Heart left ventricle (tissue), 16 donors: ENCODE measurements at regions of chr13 and their contacts with region 1.

Region 1: GRCh38 chr13:42039946-42040729 is 8.3 kb upstream of the DGKH start:
- DNase-seq: peak; percentile 93 to 96 (median 96)
- ATAC-seq: peak; percentile 83 to 96 (median 92)
- H3K4me3 ChIP-seq: peak overlapping the region; percentile 68 to 97 (median 90)
- H3K27ac ChIP-seq: peak overlapping the region; percentile 93 to 100 (median 98)
- H3K4me1 ChIP-seq: peaks cover 0 to 22% (median 10%) of the 10 kb centered on the region in 12 donors
- H3K27me3 ChIP-seq: no peaks in the 10 kb centered on the region
- CTCF ChIP-seq: peak in 3 of 12 donors; percentile 9 to 16 (median 11)
- POLR2A ChIP-seq: peak; percentile 48 to 98

Region 2: GRCh38 chr13:40984668-40985366 is 1055.3 kb before region 1 on chr13:
- intact Hi-C with region 1: no loop called
- DNase-seq: no peak
- ATAC-seq: peak in 1 of 4 donors; percentile 43
- H3K4me3 ChIP-seq: peak overlapping the region in 10 of 12 donors; percentile 14 to 57 (median 38)
- H3K27ac ChIP-seq: peak overlapping the region; percentile 73 to 95 (median 82)
- H3K4me1 ChIP-seq: peaks cover 18 to 85% (median 50%) of the 10 kb centered on the region in 12 donors
- H3K27me3 ChIP-seq: no peaks in the 10 kb centered on the region
- CTCF ChIP-seq: no peak
- POLR2A ChIP-seq: no peak

Region 3: DNA sequence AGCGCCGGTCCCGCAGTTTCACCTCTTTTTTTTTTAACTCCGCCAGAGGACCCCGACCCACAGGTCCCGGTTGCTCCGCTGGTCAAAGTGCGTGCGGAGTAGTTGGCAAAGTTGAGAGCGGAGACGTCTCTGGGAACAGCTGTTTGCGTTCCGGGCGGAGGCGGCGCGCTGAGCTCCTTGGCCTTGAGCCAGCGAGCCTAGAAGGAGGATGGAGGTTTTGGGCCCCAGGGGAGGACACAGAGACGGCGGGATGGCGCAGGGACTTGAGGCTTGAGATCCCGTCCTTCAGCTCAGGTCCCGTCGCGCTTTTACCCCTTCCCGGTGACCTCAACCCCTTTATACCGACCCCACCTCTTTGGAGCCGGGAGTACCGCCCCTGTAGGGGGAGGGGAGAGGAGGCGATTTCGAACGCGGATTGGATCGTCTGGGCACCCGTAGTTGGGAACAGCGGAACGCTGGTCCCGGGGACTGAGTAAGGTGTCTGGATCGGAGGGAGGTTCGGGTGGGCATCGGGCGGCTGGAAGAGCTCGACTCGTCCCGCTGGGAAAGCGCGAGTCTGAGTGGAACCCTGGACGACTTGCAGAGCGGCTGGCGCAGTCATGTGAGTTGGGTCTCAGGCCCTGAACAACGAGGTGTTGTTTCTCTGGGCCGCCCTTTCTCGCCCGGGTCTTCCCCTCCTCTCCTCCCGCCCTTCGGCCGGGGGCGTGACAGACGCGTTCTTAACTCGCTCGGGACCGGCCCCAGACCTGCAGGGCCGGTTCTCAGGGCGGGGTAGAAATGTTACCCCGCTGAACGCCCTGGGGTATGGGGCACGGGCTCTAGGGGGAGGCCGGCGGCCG is 978.8 kb before region 1 on chr13 and contains the start of gene WBP4:
- intact Hi-C with region 1: loop called in 1 of 10 experiments (anchors 10 kb)
- DNase-seq: peak; percentile 95 to 96 (median 96)
- ATAC-seq: peak; percentile 78 to 88 (median 84)
- H3K4me3 ChIP-seq: peak within 1 kb of the TSS; percentile 54 to 90 (median 79)
- H3K27ac ChIP-seq: peak within 1 kb of the TSS; percentile 92 to 100 (median 98)
- H3K4me1 ChIP-seq: peaks cover 6 to 71% (median 60%) of the 10 kb centered on the region in 12 donors
- H3K27me3 ChIP-seq: no peaks in the 10 kb centered on the region
- CTCF ChIP-seq: peak in 6 of 12 donors; percentile 10 to 45 (median 30)
- POLR2A ChIP-seq: peak in 1 of 2 donors; percentile 58
- total RNA-seq, gene WBP4: 12.4 to 24.6 (median 20.6) TPM

Region 4: DNA sequence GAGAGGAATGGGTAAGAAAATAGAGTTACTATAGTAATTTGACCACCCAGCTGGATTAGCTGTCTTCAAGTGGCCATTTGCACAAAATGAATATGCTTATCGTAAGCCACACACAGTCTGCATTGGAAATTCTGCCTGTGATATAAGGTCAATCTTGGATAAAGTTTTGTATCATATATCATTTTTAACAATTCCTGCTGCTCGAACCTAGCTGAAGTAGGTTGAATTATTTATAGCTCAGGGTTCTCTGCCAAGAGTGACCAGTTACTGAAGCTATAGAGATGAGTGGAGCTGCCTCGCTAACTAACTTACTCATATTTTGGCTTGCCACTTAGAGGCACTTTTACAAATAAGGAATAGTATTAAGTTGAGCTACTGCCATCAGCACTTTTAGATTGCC is 361.9 kb before region 1 on chr13:
- intact Hi-C with region 1: loop called in 2 of 10 experiments (anchors 10 kb)
- DNase-seq: no peak
- ATAC-seq: peak in 3 of 4 donors; percentile 48 to 70 (median 68)
- H3K4me3 ChIP-seq: no peak overlapping the region
- H3K27ac ChIP-seq: peak overlapping the region in 6 of 12 donors; percentile 2 to 55 (median 47)
- H3K4me1 ChIP-seq: peaks cover 0 to 28% (median 13%) of the 10 kb centered on the region in 12 donors
- H3K27me3 ChIP-seq: no peaks in the 10 kb centered on the region
- CTCF ChIP-seq: no peak
- POLR2A ChIP-seq: no peak

Region 5: GRCh38 chr13:41905600-41906254 is 134.4 kb before region 1 on chr13:
- intact Hi-C with region 1: loop called in 2 of 10 experiments (anchors 10 kb)
- DNase-seq: no peak
- ATAC-seq: peak in 3 of 4 donors; percentile 42 to 65 (median 55)
- H3K4me3 ChIP-seq: no peak overlapping the region
- H3K27ac ChIP-seq: no peak overlapping the region
- H3K4me1 ChIP-seq: no peaks in the 10 kb centered on the region
- H3K27me3 ChIP-seq: no peaks in the 10 kb centered on the region
- CTCF ChIP-seq: peak; percentile 35 to 66 (median 48)
- POLR2A ChIP-seq: no peak

Region 6: GRCh38 chr13:41960639-41961465 is 79.3 kb before region 1 on chr13 and contains the start of gene VWA8:
- intact Hi-C with region 1: loop called in 4 of 10 experiments (anchors 1 to 10 kb)
- DNase-seq: peak; percentile 84 to 92 (median 87)
- ATAC-seq: peak; percentile 75 to 97 (median 97)
- H3K4me3 ChIP-seq: peak within 1 kb of the TSS; percentile 53 to 95 (median 84)
- H3K27ac ChIP-seq: peak within 1 kb of the TSS; percentile 75 to 95 (median 90)
- H3K4me1 ChIP-seq: peaks cover 0 to 38% (median 10%) of the 10 kb centered on the region in 12 donors
- H3K27me3 ChIP-seq: no peaks in the 10 kb centered on the region
- CTCF ChIP-seq: peak in 1 of 12 donors; percentile 19
- POLR2A ChIP-seq: peak in 1 of 2 donors; percentile 20
- total RNA-seq, gene VWA8: 33.4 to 64.1 (median 50.9) TPM

Region 7: DNA sequence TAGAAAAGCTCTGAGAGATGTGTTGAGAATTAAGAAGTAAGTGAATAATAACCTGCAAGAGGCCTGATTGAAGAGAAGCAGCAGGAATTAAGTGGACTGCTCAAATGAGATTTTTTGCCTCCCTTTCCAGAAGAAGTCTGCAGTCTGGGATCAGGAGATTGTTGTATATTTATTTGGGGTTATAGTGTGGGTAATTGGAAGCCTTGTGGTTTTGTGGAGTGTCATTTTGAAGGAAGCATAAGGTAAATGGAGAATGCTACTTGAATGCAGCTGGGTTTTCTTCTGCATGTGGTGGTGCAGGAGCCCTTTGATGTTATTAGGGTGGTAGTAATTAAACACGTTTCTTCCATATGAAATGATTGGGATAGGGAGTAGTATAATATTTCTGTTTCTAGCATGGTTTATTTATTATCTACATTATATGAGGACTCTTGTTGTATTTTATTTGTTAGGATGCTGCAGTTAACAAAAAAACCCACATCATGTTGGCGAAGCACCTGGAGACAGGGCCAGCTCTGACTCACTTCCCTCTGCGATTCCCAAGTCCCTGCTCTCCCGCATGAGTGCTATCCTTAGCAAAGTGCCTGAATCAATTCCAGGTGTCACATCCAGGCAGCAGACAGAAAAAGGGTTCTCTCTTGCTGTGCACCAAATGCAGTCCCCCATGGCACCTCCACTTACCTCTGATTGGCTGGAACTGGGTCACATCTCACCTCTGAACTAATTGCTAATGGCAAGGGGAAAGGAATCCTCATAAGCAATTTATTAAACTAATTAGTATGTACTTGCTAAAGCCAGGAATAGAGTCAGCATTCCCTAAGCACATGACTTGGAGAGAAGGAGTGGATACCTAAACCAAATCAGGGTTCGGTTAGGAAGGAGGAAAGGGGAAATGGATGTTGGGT is 63.1 kb after region 1 on chr13:
- intact Hi-C with region 1: loop called in 5 of 10 experiments (anchors 5 to 10 kb)
- DNase-seq: no peak
- ATAC-seq: no peak
- H3K4me3 ChIP-seq: no peak overlapping the region
- H3K27ac ChIP-seq: no peak overlapping the region
- H3K4me1 ChIP-seq: peaks cover 0 to 24% (median 12%) of the 10 kb centered on the region in 12 donors
- H3K27me3 ChIP-seq: no peaks in the 10 kb centered on the region
- CTCF ChIP-seq: no peak
- POLR2A ChIP-seq: no peak

Region 8: DNA sequence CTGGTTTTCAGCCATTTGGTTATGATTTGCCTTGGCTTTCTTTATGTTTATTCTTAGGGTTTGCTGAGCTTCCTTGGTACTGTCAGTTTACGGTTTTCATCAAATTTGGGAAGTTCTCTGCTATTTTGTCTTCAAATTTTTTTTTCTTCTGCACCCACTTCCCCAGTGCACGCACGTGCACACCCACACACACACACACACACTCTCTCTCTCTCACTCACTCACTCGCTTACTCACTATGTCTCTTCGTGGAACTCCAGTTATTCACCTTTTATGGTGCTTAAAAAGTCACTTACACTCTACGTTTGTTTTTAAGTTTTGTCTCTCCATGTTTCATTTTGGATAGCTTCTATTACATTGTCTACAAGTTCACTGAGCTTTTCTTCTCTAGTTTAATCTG is 238.9 kb after region 1 on chr13:
- intact Hi-C with region 1: no loop called
- DNase-seq: no peak
- ATAC-seq: peak in 2 of 4 donors; percentile 12 to 24
- H3K4me3 ChIP-seq: no peak overlapping the region
- H3K27ac ChIP-seq: peak overlapping the region in 1 of 12 donors; percentile 65
- H3K4me1 ChIP-seq: peaks cover 0 to 44% (median 9%) of the 10 kb centered on the region in 12 donors
- H3K27me3 ChIP-seq: no peaks in the 10 kb centered on the region
- CTCF ChIP-seq: no peak
- POLR2A ChIP-seq: no peak